OCI-LY7 (cell line): ENCODE measurements at regions of chr13 and their contacts with region 1.

Region 1: DNA sequence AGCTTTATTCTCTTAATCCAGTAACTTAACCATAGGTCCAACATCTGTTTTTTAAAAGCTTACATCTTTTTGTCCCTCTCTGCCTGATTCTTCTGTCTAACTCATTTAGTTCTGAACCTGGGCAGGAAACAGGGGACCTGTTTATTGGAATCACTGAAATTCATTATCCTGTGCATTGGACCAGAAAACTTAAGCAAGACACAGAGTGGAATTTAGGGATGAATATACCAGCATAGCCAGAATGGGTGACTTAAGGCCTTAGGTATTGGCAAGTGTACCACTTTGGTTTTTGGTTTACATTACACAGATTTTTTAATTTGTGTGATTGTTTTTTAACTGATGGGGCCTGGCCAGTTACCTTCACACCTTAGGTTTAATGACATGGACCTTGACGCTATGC is 232.5 kb downstream of the GPC5 start:
- DNase-seq: no peak
- H3K4me3 ChIP-seq: no peak overlapping the region
- H3K27ac ChIP-seq: no peak overlapping the region
- H3K4me1 ChIP-seq: no peaks in the 10 kb centered on the region
- CTCF ChIP-seq: no peak

Region 2: GRCh38 chr13:90696254-90696653 is 934.7 kb before region 1 on chr13:
- CTCF ChIA-PET with region 1: no interaction called
- POLR2A ChIA-PET with region 1: no interaction called
- intact Hi-C with region 1: no loop called
- DNase-seq: no peak
- H3K4me3 ChIP-seq: no peak overlapping the region
- H3K27ac ChIP-seq: no peak overlapping the region
- H3K4me1 ChIP-seq: no peaks in the 10 kb centered on the region
- CTCF ChIP-seq: no peak

Region 3: DNA sequence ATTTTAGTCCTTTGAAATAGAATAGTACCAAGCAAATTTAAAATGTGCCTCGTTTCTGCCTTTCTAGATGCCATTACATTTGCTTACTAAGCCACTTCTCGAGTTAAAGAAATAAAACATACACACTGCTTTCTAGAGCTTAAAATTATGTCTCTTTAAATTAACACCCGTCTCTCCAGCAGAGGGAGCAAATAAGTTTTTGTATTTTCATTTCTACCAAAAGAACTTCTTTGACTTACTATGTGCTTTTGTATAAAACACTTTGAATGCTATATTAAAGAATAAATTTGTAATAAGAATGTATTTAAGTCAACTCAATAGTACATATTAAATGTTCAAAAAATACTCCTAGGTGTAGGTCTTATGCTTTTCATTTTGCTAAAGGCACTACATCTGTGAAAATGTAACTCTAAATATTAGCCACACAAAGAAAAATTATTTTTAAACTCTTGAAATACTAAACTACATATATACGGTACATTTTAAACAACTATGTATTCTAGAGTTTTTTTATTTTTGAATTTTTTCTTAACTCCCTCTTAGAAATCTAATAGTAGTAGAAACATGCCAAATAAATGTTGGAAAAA is 552.7 kb before region 1 on chr13:
- CTCF ChIA-PET with region 1: no interaction called
- POLR2A ChIA-PET with region 1: no interaction called
- intact Hi-C with region 1: no loop called
- DNase-seq: peak; percentile 53
- H3K4me3 ChIP-seq: no peak overlapping the region
- H3K27ac ChIP-seq: no peak overlapping the region
- H3K4me1 ChIP-seq: no peaks in the 10 kb centered on the region
- CTCF ChIP-seq: no peak

Region 4: GRCh38 chr13:91618315-91618714 is 12.6 kb before region 1 on chr13:
- CTCF ChIA-PET with region 1: no interaction called
- POLR2A ChIA-PET with region 1: interaction called, 18 read pairs
- intact Hi-C with region 1: no loop called
- DNase-seq: no peak
- H3K4me3 ChIP-seq: no peak overlapping the region
- H3K27ac ChIP-seq: no peak overlapping the region
- H3K4me1 ChIP-seq: no peaks in the 10 kb centered on the region
- CTCF ChIP-seq: no peak